ENCODE measurements at regions of chrX and their contacts with region 1.

Region 1: DNA sequence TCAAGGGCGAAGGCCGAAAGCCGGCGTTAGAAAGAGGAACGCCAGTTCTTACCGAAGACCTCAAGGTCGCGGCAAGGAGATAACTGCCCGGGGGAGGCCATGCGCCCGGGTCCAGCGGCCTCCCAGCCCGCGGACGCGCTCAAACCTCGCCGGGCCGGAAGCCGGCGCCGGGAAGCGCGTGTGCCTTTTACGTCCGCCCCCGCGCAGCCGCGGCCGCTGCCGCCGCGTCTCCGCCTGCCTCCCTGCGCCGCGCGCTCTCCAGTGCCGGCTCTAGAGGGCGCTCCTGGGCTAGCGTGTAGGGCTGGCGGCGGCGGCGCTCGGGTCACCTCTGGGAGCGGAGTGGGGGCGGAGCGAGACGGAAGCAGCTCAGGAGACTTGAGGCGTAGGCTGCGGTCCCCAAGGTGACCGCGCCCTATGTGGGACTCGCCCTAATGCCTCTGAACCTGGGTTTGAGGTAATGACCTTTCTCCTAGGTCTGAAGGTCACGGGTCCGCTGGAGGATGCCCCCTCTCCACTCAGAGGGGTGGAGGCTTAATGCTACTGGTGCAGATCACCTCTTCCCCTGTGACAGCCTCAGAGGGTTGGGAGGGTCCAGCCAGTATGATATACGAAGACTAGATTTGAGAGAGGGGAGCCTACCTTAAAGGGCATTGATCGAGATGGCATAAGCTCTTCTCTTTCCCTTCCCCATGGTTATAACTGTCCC is 839 bp downstream of the SLC25A5 start:
- DNase-seq: peak; percentile 97
- H3K4me3 Mint-ChIP-seq: peak overlapping the region; percentile 94
- H3K27ac Mint-ChIP-seq: peak overlapping the region; percentile 97
- H3K4me1 Mint-ChIP-seq: peaks cover 6% of the 10 kb centered on the region
- H3K27me3 Mint-ChIP-seq: no peaks in the 10 kb centered on the region

Region 2: DNA sequence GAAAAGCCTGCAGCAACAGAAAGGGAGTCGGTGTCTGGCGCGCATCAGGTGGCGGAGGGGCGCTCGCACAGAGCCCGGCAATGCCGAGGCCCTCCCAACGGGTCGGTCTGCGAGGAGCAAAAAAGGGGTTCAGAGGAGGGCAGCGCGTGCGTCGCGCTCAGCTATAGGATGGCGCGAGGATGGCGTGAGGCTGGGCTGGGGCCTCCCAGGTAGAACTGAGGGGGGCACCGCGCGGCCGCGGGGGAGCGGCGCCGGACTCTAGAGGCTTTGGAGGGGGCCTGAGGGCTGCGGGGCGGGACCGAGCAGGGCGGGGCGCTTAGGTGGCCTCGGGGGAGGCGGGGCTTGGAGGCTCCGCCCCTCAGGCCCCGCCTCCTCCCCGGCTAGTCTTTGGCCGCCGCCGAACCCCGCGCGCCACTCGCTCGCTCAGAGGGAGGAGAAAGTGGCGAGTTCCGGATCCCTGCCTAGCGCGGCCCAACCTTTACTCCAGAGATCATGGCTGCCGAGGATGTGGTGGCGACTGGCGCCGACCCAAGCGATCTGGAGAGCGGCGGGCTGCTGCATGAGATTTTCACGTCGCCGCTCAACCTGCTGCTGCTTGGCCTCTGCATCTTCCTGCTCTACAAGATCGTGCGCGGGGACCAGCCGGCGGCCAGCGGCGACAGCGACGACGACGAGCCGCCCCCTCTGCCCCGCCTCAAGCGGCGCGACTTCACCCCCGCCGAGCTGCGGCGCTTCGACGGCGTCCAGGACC is 233.0 kb before region 1 on chrX and contains the start of gene PGRMC1:
- intact Hi-C with region 1: loop called (anchors 2 kb)
- DNase-seq: peak; percentile 94
- H3K4me3 Mint-ChIP-seq: peak within 1 kb of the TSS; percentile 93
- H3K27ac Mint-ChIP-seq: peak within 1 kb of the TSS; percentile 76
- H3K4me1 Mint-ChIP-seq: peaks cover 18% of the 10 kb centered on the region
- H3K27me3 Mint-ChIP-seq: peaks cover 28% of the 10 kb centered on the region
- total RNA-seq, gene PGRMC1: 45.5 TPM in 2 replicates

Region 3: GRCh38 chrX:119343856-119344255 is 125.2 kb before region 1 on chrX:
- intact Hi-C with region 1: no loop called
- DNase-seq: no peak
- H3K4me3 Mint-ChIP-seq: no peak overlapping the region
- H3K27ac Mint-ChIP-seq: no peak overlapping the region
- H3K4me1 Mint-ChIP-seq: no peaks in the 10 kb centered on the region
- H3K27me3 Mint-ChIP-seq: peaks cover 11% of the 10 kb centered on the region

Region 4: DNA sequence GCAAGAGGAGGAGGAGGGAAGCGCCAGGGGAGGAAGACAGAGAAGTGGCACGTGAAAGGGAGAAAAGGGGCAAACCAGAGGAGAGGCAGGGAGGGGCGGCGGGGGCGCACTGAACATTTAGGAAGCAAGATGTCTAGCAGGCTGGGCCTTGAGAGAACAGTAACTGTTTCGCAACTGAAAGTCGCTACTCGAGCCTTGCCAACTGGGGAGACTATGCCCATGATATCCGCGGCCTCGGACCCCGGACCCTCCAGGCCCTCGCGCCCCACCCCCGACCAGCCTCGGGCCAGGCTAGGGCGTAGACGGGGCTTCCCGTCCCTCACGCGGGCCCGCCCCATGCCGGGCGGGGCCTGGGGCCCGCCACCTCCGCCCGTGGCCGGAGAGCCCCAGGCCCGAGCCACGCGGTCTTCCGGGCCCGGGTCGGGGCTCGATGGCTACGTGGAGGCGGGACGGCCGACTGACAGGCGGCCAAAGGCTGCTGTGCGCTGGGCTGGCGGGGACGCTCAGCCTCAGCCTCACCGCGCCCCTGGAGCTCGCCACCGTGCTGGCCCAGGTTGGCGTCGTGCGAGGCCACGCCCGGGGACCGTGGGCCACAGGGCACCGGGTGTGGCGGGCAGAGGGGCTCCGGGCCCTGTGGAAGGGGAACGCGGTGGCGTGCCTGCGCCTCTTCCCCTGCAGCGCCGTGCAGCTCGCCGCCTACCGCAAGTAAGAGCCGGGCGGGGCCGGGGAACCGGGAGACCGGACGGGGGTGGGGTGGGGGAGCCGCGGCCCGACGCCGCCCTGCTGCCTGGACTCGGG is 69.9 kb before region 1 on chrX and contains the start of gene SLC25A43:
- intact Hi-C with region 1: loop called (anchors 5 kb)
- DNase-seq: peak; percentile 80
- H3K4me3 Mint-ChIP-seq: peak within 1 kb of the TSS; percentile 92
- H3K27ac Mint-ChIP-seq: peak within 1 kb of the TSS; percentile 90
- H3K4me1 Mint-ChIP-seq: peaks cover 14% of the 10 kb centered on the region
- H3K27me3 Mint-ChIP-seq: peaks cover 2% of the 10 kb centered on the region
- total RNA-seq, gene SLC25A43: 10.6 and 10.7 TPM in 2 replicates

Region 5: DNA sequence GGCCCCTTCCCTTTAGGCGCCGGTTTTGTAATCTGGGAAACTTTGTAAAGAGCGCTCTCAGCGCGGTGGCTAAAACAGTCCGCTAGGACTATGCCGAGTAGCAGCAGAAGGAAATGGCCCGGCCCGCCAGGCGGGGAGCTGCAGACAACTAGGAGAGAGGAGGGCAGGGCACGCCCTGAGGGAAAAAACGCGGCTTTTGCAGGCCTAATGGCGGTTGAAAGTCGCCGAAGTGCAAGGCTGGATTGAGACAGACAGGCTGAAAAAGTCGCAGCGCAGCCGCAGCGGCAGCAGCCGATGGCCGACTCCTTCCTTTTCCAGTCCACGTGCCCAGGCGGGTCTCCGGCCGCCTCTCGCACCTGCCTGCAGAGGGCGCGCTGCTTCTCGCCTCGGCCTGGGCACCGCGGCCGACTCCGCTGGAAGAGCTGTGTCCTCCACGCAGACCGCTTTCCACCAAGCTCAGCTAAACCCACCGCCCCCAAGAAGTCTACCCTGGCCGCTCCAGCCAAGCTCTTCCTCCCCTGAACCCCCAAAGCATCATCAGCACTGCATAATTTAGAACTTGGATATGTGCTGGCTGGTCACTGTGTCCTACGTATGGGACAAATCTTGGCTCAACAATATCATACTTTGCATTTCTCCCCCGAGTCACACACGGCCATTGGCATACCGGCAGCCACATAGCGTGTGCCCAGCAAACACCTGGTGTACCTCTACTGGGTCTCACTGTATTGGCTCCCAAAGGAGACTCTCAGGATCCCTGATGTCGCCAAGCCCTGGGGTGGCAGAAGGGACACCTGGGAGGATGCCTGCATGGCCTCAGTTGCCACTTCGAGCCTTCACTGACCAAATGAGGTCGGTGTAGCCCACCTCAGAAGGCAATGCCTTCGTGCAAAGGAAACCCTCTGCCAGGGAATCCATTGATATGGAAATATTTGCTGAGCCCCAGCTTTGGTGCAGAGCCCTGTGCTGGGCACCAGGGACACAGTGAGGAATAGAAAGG is 13.7 kb after region 1 on chrX:
- intact Hi-C with region 1: loop called (anchors 1 kb)
- DNase-seq: peak; percentile 90
- H3K4me3 Mint-ChIP-seq: peak overlapping the region; percentile 74
- H3K27ac Mint-ChIP-seq: peak overlapping the region; percentile 79
- H3K4me1 Mint-ChIP-seq: peaks cover 6% of the 10 kb centered on the region
- H3K27me3 Mint-ChIP-seq: no peaks in the 10 kb centered on the region

Region 6: DNA sequence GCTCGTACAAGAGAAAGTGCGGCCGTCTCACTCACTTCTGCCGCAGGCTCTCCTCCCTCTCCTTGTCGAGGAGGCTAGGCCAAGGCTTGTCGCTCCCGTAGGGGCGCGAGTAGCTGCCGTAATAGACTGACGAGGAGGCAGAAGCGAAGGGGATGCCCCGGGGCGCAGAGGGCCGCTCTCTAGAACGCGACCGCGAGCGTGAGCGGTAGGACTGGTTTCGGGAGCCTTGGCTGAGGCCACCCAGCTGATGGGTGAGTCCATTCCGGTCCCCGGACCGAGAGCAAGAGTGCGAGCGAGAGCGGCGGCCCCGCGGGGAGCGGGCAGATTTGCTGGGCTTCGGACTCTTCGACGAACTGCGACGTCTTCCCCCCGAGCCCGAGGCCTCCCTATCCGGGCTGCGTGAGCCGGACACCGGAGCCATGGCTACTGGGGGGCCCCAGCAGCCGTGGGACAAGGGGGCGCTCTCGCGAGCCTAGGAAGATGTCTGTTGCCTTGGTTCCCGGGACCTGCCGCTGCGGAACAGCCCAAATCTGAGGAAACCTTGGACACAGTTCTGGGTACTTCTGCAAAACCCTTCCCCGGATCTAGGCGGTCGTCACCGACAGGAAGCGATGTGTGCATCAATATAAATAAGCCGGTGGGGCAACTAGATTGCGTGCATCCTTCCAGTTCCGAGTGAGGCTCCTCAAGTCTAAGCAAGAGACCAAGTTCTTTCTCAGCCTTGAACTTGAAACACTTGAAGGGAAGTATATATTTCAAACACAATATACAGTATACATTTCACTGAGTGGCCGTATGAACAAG is 474.3 kb after region 1 on chrX and contains the start of gene NKAP:
- intact Hi-C with region 1: loop called (anchors 5 kb)
- DNase-seq: peak; percentile 95
- H3K4me3 Mint-ChIP-seq: peak within 1 kb of the TSS; percentile 91
- H3K27ac Mint-ChIP-seq: peak within 1 kb of the TSS; percentile 97
- H3K4me1 Mint-ChIP-seq: peaks cover 14% of the 10 kb centered on the region
- H3K27me3 Mint-ChIP-seq: peaks cover 2% of the 10 kb centered on the region
- total RNA-seq, gene NKAP: 8.9 and 10.2 TPM in 2 replicates

Region 7: GRCh38 chrX:120468825-120469525 is 999.9 kb after region 1 on chrX and contains the start of gene LAMP2:
- intact Hi-C with region 1: loop called (anchors 2 kb)
- DNase-seq: peak; percentile 94
- H3K4me3 Mint-ChIP-seq: peak within 1 kb of the TSS; percentile 100
- H3K27ac Mint-ChIP-seq: peak within 1 kb of the TSS; percentile 96
- H3K4me1 Mint-ChIP-seq: peaks cover 20% of the 10 kb centered on the region
- H3K27me3 Mint-ChIP-seq: no peaks in the 10 kb centered on the region
- total RNA-seq, gene LAMP2: 42.6 and 44.3 TPM in 2 replicates